T-cell (primary cell): ENCODE measurements at regions of chr1 and their contacts with region 1.

Region 1: DNA sequence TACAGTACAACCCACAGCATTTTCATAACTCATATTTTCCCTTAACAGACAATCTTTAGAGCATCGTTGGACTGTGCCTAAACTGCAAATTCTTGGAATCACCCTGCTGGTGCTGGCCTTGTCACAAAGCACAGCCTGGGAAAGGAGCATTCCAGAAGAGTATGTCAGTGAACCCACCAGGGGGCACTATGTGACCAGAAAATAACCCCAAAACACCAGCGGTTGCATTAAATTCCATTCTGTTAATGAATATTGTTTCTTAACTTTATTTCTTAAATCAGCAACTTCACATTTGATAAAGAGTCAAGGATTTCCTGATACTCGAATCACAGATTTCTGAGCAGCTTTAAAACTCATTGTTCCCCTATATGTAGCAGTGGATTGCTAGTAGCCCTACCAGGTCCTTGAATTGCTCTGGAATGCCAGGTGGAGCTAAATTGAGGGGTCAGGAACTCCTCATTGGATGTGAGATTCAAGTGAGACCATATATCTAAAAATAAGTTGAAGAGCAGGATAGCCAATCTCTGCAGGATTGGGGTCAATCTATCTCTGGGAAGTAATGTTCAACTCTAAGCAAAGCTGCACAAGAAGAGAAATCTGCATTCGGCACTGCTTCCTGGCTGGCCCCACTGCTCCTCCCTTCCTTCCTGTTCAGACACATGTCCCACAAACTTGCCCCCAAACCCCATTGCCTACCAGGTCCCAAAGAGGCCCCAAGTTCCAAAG is 12.7 kb upstream of the RAB4A start:
- DNase-seq: peak in 34 of 35 experiments; percentile 19 to 85 (median 54)
- ATAC-seq: peak in 3 of 4 experiments; percentile 31 to 36 (median 31)
- H3K4me3 ChIP-seq: peak overlapping the region in 1 of 2 donors; percentile 25
- H3K4me3 Mint-ChIP-seq: peak overlapping the region in 1 of 3 donors; percentile 34
- H3K27ac ChIP-seq: peak overlapping the region; percentile 20
- H3K27ac Mint-ChIP-seq: peak overlapping the region; percentile 78 to 86
- H3K4me1 ChIP-seq: peaks cover 13 to 30% of the 10 kb centered on the region in 2 experiments
- H3K4me1 Mint-ChIP-seq: peaks cover 30 to 34% (median 33%) of the 10 kb centered on the region in 3 donors
- H3K27me3 ChIP-seq: no peaks in the 10 kb centered on the region
- H3K27me3 Mint-ChIP-seq: no peaks in the 10 kb centered on the region

Region 2: GRCh38 chr1:228664399-228664914 is 593.7 kb before region 1 on chr1:
- CTCF ChIA-PET with region 1: interaction called, 15 to 24 read pairs
- POLR2A ChIA-PET with region 1: no interaction called
- DNase-seq: peak; percentile 44 to 88 (median 73)
- ATAC-seq: peak in 2 of 4 experiments; percentile 35 to 45
- H3K4me3 ChIP-seq: no peak overlapping the region
- H3K4me3 Mint-ChIP-seq: no peak overlapping the region
- H3K27ac ChIP-seq: no peak overlapping the region
- H3K27ac Mint-ChIP-seq: no peak overlapping the region
- H3K4me1 ChIP-seq: peaks cover 0 to 3% of the 10 kb centered on the region in 2 experiments
- H3K4me1 Mint-ChIP-seq: no peaks in the 10 kb centered on the region
- H3K27me3 ChIP-seq: peaks cover 0 to 6% of the 10 kb centered on the region in 2 experiments
- H3K27me3 Mint-ChIP-seq: peaks cover 3 to 19% of the 10 kb centered on the region in 2 donors

Region 3: GRCh38 chr1:228734881-228735801 is 523.1 kb before region 1 on chr1 and contains the start of gene RHOU:
- CTCF ChIA-PET with region 1: interaction called in 1 of 2 experiments, 18 read pairs
- POLR2A ChIA-PET with region 1: interaction called in 1 of 2 experiments, 5 read pairs
- DNase-seq: peak; percentile 28 to 84 (median 57)
- ATAC-seq: peak; percentile 88 to 91 (median 90)
- H3K4me3 ChIP-seq: peak within 1 kb of the TSS; percentile 50 to 73
- H3K4me3 Mint-ChIP-seq: peak within 1 kb of the TSS; percentile 85 to 90 (median 86)
- H3K27ac ChIP-seq: peak within 1 kb of the TSS; percentile 36
- H3K27ac Mint-ChIP-seq: peak within 1 kb of the TSS; percentile 69 to 81
- H3K4me1 ChIP-seq: peaks cover 0 to 39% of the 10 kb centered on the region in 2 experiments
- H3K4me1 Mint-ChIP-seq: peaks cover 26 to 27% (median 26%) of the 10 kb centered on the region in 3 donors
- H3K27me3 ChIP-seq: peaks cover 0 to 2% of the 10 kb centered on the region in 2 experiments
- H3K27me3 Mint-ChIP-seq: peaks cover 10 to 11% of the 10 kb centered on the region in 2 donors
- total RNA-seq, gene RHOU: 1.5 to 2.3 (median 1.8) TPM

Region 4: GRCh38 chr1:229479660-229480399 is 221.6 kb after region 1 on chr1:
- CTCF ChIA-PET with region 1: interaction called, 7 to 52 read pairs
- POLR2A ChIA-PET with region 1: interaction called in 1 of 2 experiments, 6 read pairs
- DNase-seq: no peak
- ATAC-seq: no peak
- H3K4me3 ChIP-seq: no peak overlapping the region
- H3K4me3 Mint-ChIP-seq: no peak overlapping the region
- H3K27ac ChIP-seq: no peak overlapping the region
- H3K27ac Mint-ChIP-seq: no peak overlapping the region
- H3K4me1 ChIP-seq: no peaks in the 10 kb centered on the region
- H3K4me1 Mint-ChIP-seq: peaks cover 5 to 17% (median 16%) of the 10 kb centered on the region in 3 donors
- H3K27me3 ChIP-seq: no peaks in the 10 kb centered on the region
- H3K27me3 Mint-ChIP-seq: no peaks in the 10 kb centered on the region

Region 5: DNA sequence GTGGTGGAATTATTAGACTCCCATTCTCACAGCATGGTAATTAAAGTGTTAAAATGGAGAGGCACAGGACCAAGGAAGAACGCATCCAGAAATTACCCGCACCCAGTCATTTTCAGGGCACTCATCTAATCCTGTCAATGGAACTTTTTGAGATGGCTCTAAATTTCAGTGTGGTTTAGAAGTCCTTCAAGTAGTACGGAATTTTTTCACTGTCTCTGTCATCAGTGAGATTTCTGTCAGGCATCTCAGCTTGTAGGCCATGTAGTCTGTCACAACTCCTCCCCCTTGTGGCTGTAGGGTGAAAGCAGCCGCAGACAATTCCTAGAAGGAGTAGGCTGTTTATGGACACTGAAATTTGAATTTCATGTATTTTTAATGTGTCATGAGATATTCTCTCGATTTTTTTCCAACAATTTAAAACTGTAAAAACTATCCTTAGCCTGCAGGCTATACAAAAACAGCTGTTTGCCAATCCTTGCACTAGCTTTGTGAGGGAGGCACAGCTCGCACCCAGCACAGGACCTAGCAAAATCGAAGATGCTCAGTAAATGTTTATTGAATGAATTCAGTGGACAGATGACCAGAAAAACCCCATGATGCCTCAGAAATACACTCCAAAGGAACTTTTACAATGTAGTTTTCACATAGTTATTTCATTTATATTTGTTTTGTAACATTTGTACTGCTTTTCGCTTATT is 256.5 kb after region 1 on chr1:
- CTCF ChIA-PET with region 1: interaction called, 5 to 11 read pairs
- POLR2A ChIA-PET with region 1: no interaction called
- DNase-seq: peak; percentile 5 to 83 (median 53)
- ATAC-seq: peak; percentile 87 to 100 (median 92)
- H3K4me3 ChIP-seq: no peak overlapping the region
- H3K4me3 Mint-ChIP-seq: no peak overlapping the region
- H3K27ac ChIP-seq: no peak overlapping the region
- H3K27ac Mint-ChIP-seq: no peak overlapping the region
- H3K4me1 ChIP-seq: peaks cover 2 to 6% of the 10 kb centered on the region in 2 experiments
- H3K4me1 Mint-ChIP-seq: peaks cover 7% of the 10 kb centered on the region in 3 donors
- H3K27me3 ChIP-seq: no peaks in the 10 kb centered on the region
- H3K27me3 Mint-ChIP-seq: no peaks in the 10 kb centered on the region